ENCODE measurements at regions of chr19 and their contacts with region 1.

Region 1: DNA sequence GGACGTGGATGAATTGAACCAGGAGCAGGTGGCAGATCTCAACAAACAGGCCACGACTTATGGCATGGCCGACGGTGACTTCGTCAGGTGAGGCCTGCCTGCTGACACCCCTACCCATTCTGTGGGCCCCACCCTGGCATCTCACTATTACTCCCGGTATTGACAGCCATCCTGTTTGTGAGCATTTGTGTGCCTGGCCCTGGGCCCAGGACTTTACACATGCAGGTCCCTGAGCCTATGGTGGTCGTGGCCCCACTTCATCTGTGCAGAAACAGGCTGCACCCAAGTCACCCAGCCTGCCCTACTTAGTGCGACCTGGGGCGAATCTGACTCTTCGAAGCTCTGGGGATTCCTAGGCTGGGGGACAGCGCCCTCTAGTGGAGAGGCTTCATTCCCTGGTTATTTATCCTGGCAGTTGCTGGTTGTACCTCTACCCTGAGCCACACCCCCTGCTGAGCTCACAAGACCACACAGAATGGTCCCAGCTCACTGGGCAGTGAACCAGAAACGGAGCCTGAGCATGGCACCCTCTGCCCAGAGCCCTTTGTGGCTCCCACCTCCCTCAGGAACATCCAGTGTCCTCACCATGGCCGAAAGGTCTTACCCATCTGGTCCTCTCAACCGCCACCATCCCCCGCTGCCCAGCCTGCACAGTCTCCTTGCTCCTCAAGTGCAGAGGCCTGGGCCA is 16.9 kb downstream of the ZNF296 start:
- DNase-seq: peak; percentile 91
- ATAC-seq: peak; percentile 93
- H3K4me3 Mint-ChIP-seq: no peak overlapping the region
- H3K27ac Mint-ChIP-seq: no peak overlapping the region
- H3K4me1 Mint-ChIP-seq: no peaks in the 10 kb centered on the region
- H3K27me3 Mint-ChIP-seq: no peaks in the 10 kb centered on the region

Region 2: DNA sequence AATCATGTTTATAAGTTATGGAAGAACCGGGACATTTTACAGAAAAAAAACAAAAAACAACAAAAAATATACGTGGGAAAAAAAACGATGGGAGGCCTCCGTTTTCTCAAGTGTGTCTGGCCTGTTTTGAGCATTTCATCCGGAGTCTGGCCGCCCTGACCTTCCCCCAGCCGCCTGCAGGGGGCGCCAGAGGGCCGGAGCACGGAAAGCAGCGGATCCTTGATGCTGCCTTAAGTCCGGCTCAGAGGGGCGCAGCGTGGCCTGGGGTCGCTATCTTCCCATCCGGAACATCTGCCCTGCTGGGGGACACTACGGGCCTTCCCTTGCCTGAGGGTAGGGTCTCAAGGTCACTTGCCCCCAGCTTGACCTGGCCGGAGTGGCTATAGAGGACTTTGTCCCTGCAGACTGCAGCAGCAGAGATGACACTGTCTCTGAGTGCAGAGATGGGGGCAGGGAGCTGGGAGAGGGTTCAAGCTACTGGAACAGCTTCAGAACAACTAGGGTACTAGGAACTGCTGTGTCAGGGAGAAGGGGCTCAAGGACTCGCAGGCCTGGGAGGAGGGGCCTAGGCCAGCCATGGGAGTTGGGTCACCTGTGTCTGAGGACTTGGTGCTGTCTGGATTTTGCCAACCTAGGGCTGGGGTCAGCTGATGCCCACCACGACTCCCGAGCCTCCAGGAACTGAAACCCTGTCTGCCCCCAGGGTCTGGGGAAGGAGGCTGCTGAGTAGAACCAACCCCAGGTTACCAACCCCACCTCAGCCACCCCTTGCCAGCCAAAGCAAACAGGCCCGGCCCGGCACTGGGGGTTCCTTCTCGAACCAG is 155.6 kb before region 1 on chr19:
- CTCF ChIA-PET with region 1: no interaction called
- POLR2A ChIA-PET with region 1: no interaction called
- intact Hi-C with region 1: loop called in 1 of 2 experiments (anchors 1 kb)
- DNase-seq: peak; percentile 85
- ATAC-seq: peak; percentile 67
- H3K4me3 Mint-ChIP-seq: no peak overlapping the region
- H3K27ac Mint-ChIP-seq: no peak overlapping the region
- H3K4me1 Mint-ChIP-seq: peaks cover 8% of the 10 kb centered on the region
- H3K27me3 Mint-ChIP-seq: peaks cover 17% of the 10 kb centered on the region

Region 3: GRCh38 chr19:44988896-44989556 is 70.4 kb before region 1 on chr19:
- CTCF ChIA-PET with region 1: interaction called, 9 read pairs
- POLR2A ChIA-PET with region 1: no interaction called
- intact Hi-C with region 1: loop called in 1 of 2 experiments (anchors 1 kb)
- DNase-seq: peak; percentile 82
- ATAC-seq: peak; percentile 89
- H3K4me3 Mint-ChIP-seq: no peak overlapping the region
- H3K27ac Mint-ChIP-seq: no peak overlapping the region
- H3K4me1 Mint-ChIP-seq: no peaks in the 10 kb centered on the region
- H3K27me3 Mint-ChIP-seq: no peaks in the 10 kb centered on the region

Region 4: GRCh38 chr19:45016388-45017319 is 42.8 kb before region 1 on chr19:
- CTCF ChIA-PET with region 1: interaction called, 7 read pairs
- POLR2A ChIA-PET with region 1: no interaction called
- intact Hi-C with region 1: loop called (anchors 1 to 5 kb)
- DNase-seq: peak; percentile 83
- ATAC-seq: peak; percentile 79
- H3K4me3 Mint-ChIP-seq: peak overlapping the region; percentile 40
- H3K27ac Mint-ChIP-seq: peak overlapping the region; percentile 83
- H3K4me1 Mint-ChIP-seq: peaks cover 9% of the 10 kb centered on the region
- H3K27me3 Mint-ChIP-seq: no peaks in the 10 kb centered on the region

Region 5: DNA sequence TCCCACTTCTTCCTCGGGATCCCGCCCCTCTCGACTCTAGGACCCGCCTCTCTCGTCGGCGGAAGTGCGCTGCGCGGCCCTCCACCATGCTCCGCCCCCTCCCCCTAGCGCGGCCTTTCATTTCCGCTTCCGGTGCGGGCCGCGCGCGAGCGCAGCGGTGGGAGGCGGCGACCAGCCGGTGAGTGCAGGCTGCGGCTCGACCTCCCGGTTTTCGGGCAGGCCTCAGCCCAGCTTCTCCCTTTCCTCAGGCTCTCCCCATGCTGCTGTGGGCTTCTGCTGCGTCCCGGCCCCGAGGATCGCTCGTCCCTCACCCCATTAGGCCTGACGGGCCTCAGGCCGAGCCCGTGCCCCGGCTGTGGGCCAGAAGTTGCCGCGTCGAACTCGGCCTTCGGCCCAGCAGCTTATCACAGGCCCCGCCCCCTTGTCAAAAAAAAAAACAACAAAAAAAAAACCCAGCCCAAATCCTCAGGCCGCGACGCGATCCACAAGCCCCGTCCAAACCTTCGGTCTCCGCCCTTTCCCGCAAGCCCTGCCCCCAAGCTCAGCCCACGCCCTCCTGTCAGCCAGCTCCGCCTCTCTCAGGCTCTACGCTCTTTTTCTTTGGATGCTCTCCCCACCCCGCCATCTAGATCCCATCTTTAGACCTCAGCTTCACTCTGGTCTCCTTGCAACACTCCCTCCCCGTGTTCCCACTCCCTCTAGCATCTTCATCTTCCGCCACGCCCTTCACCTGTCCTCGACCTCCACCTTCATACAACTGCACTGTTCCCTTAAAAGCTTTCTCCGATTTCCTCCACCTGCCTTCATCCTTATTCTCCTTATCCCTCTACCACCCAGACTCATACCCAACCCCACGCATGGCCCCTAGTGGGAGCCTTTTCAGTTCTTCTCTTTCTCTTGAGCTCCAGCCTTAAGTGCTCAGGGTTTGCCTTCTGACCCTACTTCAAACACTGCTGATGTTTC is 20.2 kb before region 1 on chr19 and contains the start of gene CLASRP:
- CTCF ChIA-PET with region 1: interaction called, 16 read pairs
- POLR2A ChIA-PET with region 1: interaction called, 3 read pairs
- intact Hi-C with region 1: no loop called
- DNase-seq: peak; percentile 94
- ATAC-seq: peak; percentile 96
- H3K4me3 Mint-ChIP-seq: peak within 1 kb of the TSS; percentile 97
- H3K27ac Mint-ChIP-seq: peak within 1 kb of the TSS; percentile 96
- H3K4me1 Mint-ChIP-seq: peaks cover 32% of the 10 kb centered on the region
- H3K27me3 Mint-ChIP-seq: no peaks in the 10 kb centered on the region
- total RNA-seq, gene CLASRP: 101 to 103 TPM

Region 6: GRCh38 chr19:45049073-45049736 is 10.2 kb before region 1 on chr19:
- CTCF ChIA-PET with region 1: interaction called, 10 read pairs
- POLR2A ChIA-PET with region 1: no interaction called
- intact Hi-C with region 1: no loop called
- DNase-seq: no peak
- ATAC-seq: no peak
- H3K4me3 Mint-ChIP-seq: no peak overlapping the region
- H3K27ac Mint-ChIP-seq: peak overlapping the region; percentile 44
- H3K4me1 Mint-ChIP-seq: peaks cover 37% of the 10 kb centered on the region
- H3K27me3 Mint-ChIP-seq: no peaks in the 10 kb centered on the region

Measured in activated CD4-positive, alpha-beta T cell treated with anti-CD3 and anti-CD28 coated beads for 36 hours (primary cell).